ENCODE measurements at regions of chr5 and their contacts with region 1.

Region 1: DNA sequence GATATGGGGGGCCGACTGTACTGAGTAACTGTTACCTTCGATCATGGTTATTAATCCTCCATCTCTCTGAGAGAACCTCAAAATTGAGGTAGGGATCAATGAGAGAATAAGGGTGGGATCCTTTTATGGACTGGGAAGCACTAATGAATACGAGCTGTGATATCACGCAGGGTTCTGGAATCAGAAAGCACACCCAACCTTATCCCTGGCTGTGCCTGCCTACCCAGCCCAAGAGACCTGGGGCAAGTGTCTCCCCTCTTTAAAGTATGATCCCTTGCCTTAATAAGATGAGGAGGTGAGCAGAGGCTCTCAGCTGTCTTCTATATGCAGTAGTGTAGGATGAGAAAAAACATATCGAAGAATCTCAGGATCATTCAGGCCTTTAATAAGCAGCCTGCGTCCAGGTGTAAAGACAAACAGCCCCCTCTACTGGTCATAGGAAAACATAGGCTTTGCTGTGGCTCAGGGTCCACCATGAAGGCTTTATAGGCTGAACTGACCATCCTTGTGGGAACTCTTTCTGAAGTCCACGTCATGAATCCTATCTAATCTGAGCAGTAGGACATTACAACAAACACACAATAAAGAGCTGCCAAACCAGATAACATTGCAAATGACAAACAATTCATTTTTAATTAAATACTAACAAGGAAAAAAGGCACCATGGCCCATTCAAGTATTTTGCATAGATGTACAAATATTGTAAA is 16.8 kb downstream of the NIPAL4 start:
- DNase-seq: no peak
- H3K4me3 ChIP-seq: no peak overlapping the region
- H3K27ac ChIP-seq: no peak overlapping the region
- H3K4me1 ChIP-seq: no peaks in the 10 kb centered on the region
- H3K27me3 ChIP-seq: no peaks in the 10 kb centered on the region
- CTCF ChIP-seq: peak in 1 of 3 donors; percentile 14
- EP300 ChIP-seq: no peak
- POLR2A ChIP-seq: no peak

Region 2: DNA sequence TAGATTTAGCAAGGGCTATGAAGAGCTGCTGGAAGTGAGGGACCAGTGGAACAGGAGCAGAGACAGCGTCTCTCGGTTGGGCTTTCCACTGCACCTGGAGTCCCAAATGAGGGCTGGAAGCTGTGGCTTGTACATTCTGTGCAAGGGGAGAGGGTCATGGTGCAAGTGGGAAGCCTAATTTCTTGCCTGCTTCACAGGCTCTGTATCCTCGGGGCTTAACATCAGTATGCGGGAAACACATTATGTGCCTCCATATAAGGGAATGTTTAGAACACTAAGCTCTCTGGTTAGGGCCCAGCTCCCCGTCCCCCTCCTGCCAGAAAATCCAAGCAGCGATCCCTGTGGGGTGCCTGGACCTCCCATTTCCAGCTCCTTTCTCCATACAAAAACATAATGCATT is 105.9 kb before region 1 on chr5:
- intact Hi-C with region 1: loop called in 1 of 4 experiments (anchors 10 kb)
- DNase-seq: no peak
- H3K4me3 ChIP-seq: no peak overlapping the region
- H3K27ac ChIP-seq: no peak overlapping the region
- H3K4me1 ChIP-seq: no peaks in the 10 kb centered on the region
- H3K27me3 ChIP-seq: no peaks in the 10 kb centered on the region
- CTCF ChIP-seq: no peak
- EP300 ChIP-seq: no peak
- POLR2A ChIP-seq: no peak

Region 3: GRCh38 chr5:157812086-157812485 is 335.2 kb after region 1 on chr5:
- intact Hi-C with region 1: no loop called
- DNase-seq: no peak
- H3K4me3 ChIP-seq: no peak overlapping the region
- H3K27ac ChIP-seq: no peak overlapping the region
- H3K4me1 ChIP-seq: peaks cover 3% of the 10 kb centered on the region
- H3K27me3 ChIP-seq: no peaks in the 10 kb centered on the region
- CTCF ChIP-seq: no peak
- EP300 ChIP-seq: no peak
- POLR2A ChIP-seq: no peak